Ovary (tissue), 10 donors: ENCODE measurements at regions of chr1 and their contacts with region 1.

Region 1: DNA sequence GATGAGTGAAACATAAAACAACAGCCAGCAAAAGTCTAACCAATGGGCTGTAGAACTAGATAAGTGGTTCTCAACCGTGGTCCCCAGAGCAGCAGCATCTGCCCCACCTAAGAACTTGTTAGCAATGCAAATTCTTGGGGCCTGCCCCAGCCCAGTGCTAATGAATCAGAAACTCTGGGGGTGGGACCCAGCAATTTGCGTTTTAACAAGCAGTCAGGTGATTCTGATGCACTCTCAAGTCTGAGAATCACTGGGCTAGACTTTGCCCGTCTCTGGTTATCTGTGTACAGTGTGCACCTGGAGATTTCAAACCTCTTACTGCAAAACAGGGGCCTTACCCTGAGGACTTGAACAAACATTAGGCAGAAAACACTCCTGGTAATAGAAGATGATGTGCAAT is 66.5 kb downstream of the PLXNA2 start:
- DNase-seq: no peak
- H3K4me3 ChIP-seq: no peak overlapping the region
- H3K27ac ChIP-seq: no peak overlapping the region
- H3K4me1 ChIP-seq: peaks cover 29% of the 10 kb centered on the region
- H3K27me3 ChIP-seq: no peaks in the 10 kb centered on the region
- CTCF ChIP-seq: no peak
- EP300 ChIP-seq: no peak
- POLR2A ChIP-seq: no peak

Region 2: GRCh38 chr1:208192995-208193394 is 15.3 kb after region 1 on chr1:
- intact Hi-C with region 1: loop called in 1 of 4 experiments (anchors 2 kb)
- DNase-seq: peak in 1 of 5 donors; percentile 61
- H3K4me3 ChIP-seq: no peak overlapping the region
- H3K27ac ChIP-seq: no peak overlapping the region
- H3K4me1 ChIP-seq: no peaks in the 10 kb centered on the region
- H3K27me3 ChIP-seq: no peaks in the 10 kb centered on the region
- CTCF ChIP-seq: no peak
- EP300 ChIP-seq: no peak
- POLR2A ChIP-seq: no peak